ENCODE measurements at regions of chr6 and their contacts with region 1.

Region 1: GRCh38 chr6:5665173-5665572 is 341.6 kb downstream of the NRN1 start:
- DNase-seq: peak; percentile 1 to 58 (median 34)
- ATAC-seq: peak; percentile 85
- H3K4me3 ChIP-seq: no peak overlapping the region
- H3K4me3 Mint-ChIP-seq: peak overlapping the region; percentile 63
- H3K27ac ChIP-seq: peak overlapping the region; percentile 27 to 44
- H3K27ac Mint-ChIP-seq: peak overlapping the region; percentile 81
- H3K4me1 ChIP-seq: peaks cover 48% of the 10 kb centered on the region
- H3K4me1 Mint-ChIP-seq: peaks cover 78% of the 10 kb centered on the region
- H3K27me3 ChIP-seq: no peaks in the 10 kb centered on the region
- H3K27me3 Mint-ChIP-seq: no peaks in the 10 kb centered on the region
- CTCF ChIP-seq: no peak

Region 2: DNA sequence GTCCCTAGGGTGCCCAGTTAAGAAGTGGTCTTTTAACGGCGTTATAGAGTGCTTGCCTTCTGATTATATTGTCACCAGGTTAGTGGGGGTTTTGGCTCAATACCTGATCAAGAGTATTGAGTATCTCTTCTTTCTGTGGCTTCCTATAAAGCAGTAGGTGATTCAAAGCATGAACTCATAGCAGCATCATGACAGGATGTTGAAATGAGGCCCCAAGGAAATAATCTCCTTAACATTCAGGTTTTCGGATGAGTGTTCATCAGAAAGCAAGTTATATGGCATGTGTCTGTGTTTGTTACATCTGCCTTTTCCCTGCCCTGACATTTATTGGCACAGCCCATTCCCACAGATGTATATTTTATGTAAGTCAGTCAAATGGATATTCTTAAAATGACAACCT is 102.9 kb before region 1 on chr6:
- CTCF ChIA-PET with region 1: no interaction called
- POLR2A ChIA-PET with region 1: no interaction called
- intact Hi-C with region 1: no loop called
- DNase-seq: no peak
- ATAC-seq: no peak
- H3K4me3 ChIP-seq: no peak overlapping the region
- H3K4me3 Mint-ChIP-seq: no peak overlapping the region
- H3K27ac ChIP-seq: no peak overlapping the region
- H3K27ac Mint-ChIP-seq: no peak overlapping the region
- H3K4me1 ChIP-seq: no peaks in the 10 kb centered on the region
- H3K4me1 Mint-ChIP-seq: peaks cover 9% of the 10 kb centered on the region
- H3K27me3 ChIP-seq: no peaks in the 10 kb centered on the region
- H3K27me3 Mint-ChIP-seq: no peaks in the 10 kb centered on the region
- CTCF ChIP-seq: no peak

Region 3: DNA sequence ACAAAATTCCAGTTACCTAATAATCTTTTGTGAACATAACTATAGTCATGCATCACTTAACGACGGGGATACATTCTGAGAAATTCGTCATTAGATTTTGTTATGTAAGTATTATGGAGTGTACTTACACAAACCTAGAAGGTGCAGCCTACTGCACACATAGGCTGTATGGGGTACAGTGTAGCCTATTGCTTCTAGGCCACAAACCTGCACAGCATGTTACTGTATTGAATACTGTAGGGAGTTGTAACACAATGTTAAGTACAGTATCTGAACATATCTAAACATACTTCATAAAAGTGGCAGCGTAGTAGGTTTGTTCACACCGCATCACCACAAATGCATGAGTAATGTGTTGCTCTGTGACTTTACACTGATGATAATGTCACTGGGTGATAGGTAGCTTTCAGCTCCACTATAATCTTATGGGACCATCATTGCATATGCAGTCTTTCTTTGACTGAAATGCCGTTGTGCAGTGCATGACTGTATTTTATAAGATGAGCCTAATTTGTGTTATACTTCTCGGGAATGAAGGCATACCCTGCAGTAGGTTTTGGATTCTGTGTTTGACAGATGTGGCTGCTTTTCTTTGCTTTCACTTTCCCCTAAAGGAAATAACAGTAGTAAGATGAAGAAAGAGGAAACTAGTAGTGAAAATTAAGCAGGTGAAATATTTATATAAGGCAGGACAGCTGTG is 38.3 kb before region 1 on chr6:
- CTCF ChIA-PET with region 1: no interaction called
- POLR2A ChIA-PET with region 1: interaction called, 4 read pairs
- intact Hi-C with region 1: loop called in 1 of 2 experiments (anchors 5 kb)
- DNase-seq: peak in 3 of 14 experiments; percentile 22 to 57 (median 33)
- ATAC-seq: peak; percentile 51
- H3K4me3 ChIP-seq: peak overlapping the region; percentile 11
- H3K4me3 Mint-ChIP-seq: peak overlapping the region; percentile 7
- H3K27ac ChIP-seq: peak overlapping the region; percentile 1 to 8
- H3K27ac Mint-ChIP-seq: peak overlapping the region; percentile 69
- H3K4me1 ChIP-seq: peaks cover 13% of the 10 kb centered on the region
- H3K4me1 Mint-ChIP-seq: peaks cover 53% of the 10 kb centered on the region
- H3K27me3 ChIP-seq: no peaks in the 10 kb centered on the region
- H3K27me3 Mint-ChIP-seq: no peaks in the 10 kb centered on the region
- CTCF ChIP-seq: no peak

Region 4: DNA sequence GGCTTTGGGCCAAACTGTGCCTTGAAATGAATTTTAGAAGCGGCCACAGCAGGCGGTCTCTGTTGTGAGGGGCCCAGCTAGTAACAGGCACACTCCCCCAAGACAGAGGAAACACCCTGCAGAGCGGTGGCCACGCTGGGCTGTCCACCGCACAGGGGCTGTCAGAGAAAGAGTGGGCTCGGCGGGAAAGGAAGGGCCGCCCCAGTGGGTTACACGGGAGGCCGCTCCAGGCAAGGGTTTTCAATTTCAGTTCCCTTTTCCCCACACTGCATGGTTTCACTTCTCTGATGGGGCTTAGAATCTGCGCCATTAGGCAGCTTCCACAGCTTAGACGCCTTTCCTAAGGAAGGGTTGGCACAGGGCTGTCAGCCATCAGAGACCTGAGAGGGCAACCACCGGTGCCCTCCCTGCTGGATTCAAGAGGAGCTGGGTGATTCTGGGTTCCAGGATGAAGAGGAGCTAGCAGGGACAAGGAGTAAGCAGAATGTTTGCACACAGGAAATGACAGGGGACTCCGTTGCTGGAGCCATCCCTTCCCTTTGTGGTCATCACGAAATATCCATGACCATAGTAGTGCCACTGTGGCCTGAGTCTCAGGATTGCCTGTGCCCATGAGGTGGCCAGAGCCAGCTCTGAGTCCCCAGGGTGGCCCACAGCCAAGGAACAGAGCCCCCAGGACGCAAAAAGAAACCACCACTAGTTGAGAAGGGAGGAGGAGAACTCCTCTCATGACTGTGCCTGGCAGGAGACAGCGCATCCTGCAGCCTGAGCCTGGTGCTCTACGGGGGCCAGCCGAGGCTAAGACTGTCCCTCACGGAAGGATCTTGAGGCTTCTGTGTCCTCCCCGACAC is 58.9 kb after region 1 on chr6:
- CTCF ChIA-PET with region 1: no interaction called
- POLR2A ChIA-PET with region 1: no interaction called
- intact Hi-C with region 1: loop called in 1 of 2 experiments (anchors 10 kb)
- DNase-seq: peak in 3 of 14 experiments; percentile 9 to 50 (median 49)
- ATAC-seq: no peak
- H3K4me3 ChIP-seq: peak overlapping the region; percentile 25
- H3K4me3 Mint-ChIP-seq: peak overlapping the region; percentile 66
- H3K27ac ChIP-seq: no peak overlapping the region
- H3K27ac Mint-ChIP-seq: peak overlapping the region; percentile 58
- H3K4me1 ChIP-seq: peaks cover 7% of the 10 kb centered on the region
- H3K4me1 Mint-ChIP-seq: peaks cover 31% of the 10 kb centered on the region
- H3K27me3 ChIP-seq: no peaks in the 10 kb centered on the region
- H3K27me3 Mint-ChIP-seq: no peaks in the 10 kb centered on the region
- CTCF ChIP-seq: no peak

Measured in CD4-positive, alpha-beta T cell (primary cell).